ENCODE measurements at regions of chr16 and their contacts with region 1.

Region 1: DNA sequence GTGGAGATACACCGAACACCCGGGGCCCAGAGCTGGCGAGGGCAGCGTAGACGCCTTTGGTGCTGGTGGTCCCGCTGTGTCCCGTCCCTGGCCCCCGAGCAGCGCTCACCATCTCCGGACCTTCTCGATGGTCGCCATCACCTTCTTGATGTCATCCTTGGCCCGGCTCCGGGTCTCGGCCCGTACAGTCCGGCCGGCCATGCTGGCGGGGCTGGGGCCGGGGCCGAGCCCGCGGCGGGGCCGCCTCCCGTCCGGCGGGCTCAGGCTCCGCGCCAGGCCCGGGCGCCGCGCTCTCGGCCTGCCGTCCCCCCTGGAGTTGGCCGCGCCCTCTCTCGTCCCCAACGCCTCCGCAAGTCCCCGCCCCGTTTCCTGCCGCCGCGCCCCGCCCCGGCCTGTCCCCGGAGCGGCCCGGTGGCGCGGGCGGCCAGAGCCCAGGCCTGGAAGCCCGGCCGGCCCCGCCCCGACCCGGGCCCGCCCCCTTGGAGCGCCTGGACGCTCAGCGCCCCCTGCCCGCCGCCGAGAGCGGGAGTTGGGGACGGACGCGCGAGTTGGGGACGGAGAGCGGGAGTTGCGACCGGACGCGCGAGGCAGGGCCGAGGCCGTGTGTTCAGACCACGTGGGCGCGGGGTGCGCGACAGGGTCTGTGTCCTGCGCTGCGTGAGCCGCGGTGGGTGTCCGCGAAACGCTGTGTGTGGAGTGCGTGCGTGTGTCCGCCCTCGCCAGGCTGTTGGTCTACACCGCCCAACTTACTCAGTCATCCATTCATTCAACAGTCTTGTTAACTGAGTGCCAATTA is at the start of gene BCL7C:
- DNase-seq: peak; percentile 96 to 97 (median 96)
- ATAC-seq: peak; percentile 50 to 90 (median 81)
- H3K4me3 ChIP-seq: peak within 1 kb of the TSS; percentile 79 to 98 (median 89)
- H3K27ac ChIP-seq: peak within 1 kb of the TSS; percentile 81 to 99 (median 95)
- H3K4me1 ChIP-seq: peaks cover 0 to 46% (median 33%) of the 10 kb centered on the region in 12 donors
- H3K27me3 ChIP-seq: no peaks in the 10 kb centered on the region
- CTCF ChIP-seq: peak; percentile 21 to 82 (median 56)
- POLR2A ChIP-seq: peak in 1 of 2 donors; percentile 33
- total RNA-seq, gene BCL7C: 23.1 to 35.5 (median 28.1) TPM

Region 2: GRCh38 chr16:30874821-30875717 is 18.9 kb before region 1 on chr16:
- intact Hi-C with region 1: loop called in 5 of 10 experiments (anchors 1 to 2 kb)
- DNase-seq: peak; percentile 92 to 96 (median 95)
- ATAC-seq: peak; percentile 97 to 99 (median 98)
- H3K4me3 ChIP-seq: peak overlapping the region; percentile 52 to 99 (median 87)
- H3K27ac ChIP-seq: peak overlapping the region; percentile 80 to 100 (median 94)
- H3K4me1 ChIP-seq: peaks cover 3 to 29% (median 20%) of the 10 kb centered on the region in 12 donors
- H3K27me3 ChIP-seq: no peaks in the 10 kb centered on the region
- CTCF ChIP-seq: peak in 1 of 12 donors; percentile 12
- POLR2A ChIP-seq: peak in 1 of 2 donors; percentile 86

Region 3: DNA sequence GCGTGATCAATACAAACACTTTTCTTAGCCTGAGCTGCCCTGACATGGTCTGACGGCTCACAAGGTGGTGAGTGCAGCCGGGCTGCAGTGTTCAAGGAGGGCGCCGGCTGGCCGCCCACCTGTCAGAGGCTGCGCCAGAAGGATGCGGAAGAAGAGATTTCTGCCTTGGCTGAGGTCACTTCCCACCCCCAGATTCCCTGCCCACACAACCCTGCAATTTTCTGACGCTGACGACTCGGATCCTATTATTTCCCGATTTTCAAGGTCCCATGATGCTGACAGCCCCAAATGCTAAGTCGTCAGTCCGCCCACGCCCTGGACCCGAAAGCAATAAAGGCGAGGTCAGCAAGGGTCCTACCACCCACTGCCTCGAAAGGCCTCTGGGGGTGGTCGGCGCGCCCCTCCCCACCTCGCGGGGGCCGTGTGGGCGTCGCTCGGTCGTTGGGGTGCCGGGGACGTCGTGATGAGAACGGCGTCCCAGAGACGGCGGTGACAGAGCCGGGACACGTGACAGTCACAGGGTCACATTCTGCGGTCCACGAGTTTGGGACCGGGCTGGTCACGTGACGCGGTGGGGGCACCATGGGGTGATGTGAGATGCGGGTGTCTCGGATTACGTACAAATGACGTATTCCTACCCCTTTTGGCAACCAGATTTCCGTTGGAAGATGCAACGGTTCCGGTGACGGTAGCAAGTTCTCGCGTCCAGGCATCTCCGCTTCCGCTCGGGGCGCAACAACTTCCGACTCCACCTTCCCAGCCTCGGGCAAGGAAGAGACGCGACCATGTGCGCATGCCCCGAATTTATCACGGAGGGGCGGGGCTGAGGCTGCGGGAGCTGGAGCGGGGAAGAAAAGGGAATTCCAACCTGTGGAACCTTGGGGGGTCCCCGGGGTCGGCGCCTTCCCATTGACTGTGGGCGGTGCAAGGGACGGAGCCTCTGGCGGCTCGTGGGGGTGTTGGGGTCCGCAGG is 139.1 kb after region 1 on chr16 and contains the start of gene STX4:
- intact Hi-C with region 1: no loop called
- DNase-seq: peak; percentile 98 to 99 (median 98)
- ATAC-seq: peak; percentile 93 to 95 (median 94)
- H3K4me3 ChIP-seq: peak within 1 kb of the TSS; percentile 73 to 100 (median 90)
- H3K27ac ChIP-seq: peak within 1 kb of the TSS; percentile 91 to 99 (median 96)
- H3K4me1 ChIP-seq: peaks cover 4 to 31% (median 18%) of the 10 kb centered on the region in 12 donors
- H3K27me3 ChIP-seq: no peaks in the 10 kb centered on the region
- CTCF ChIP-seq: no peak
- POLR2A ChIP-seq: no peak
- total RNA-seq, gene STX4: 19.5 to 65.8 (median 39.7) TPM

Measured in heart left ventricle (tissue), 16 donors.